B cell (primary cell): ENCODE measurements at regions of chr5 and their contacts with region 1.

Region 1: DNA sequence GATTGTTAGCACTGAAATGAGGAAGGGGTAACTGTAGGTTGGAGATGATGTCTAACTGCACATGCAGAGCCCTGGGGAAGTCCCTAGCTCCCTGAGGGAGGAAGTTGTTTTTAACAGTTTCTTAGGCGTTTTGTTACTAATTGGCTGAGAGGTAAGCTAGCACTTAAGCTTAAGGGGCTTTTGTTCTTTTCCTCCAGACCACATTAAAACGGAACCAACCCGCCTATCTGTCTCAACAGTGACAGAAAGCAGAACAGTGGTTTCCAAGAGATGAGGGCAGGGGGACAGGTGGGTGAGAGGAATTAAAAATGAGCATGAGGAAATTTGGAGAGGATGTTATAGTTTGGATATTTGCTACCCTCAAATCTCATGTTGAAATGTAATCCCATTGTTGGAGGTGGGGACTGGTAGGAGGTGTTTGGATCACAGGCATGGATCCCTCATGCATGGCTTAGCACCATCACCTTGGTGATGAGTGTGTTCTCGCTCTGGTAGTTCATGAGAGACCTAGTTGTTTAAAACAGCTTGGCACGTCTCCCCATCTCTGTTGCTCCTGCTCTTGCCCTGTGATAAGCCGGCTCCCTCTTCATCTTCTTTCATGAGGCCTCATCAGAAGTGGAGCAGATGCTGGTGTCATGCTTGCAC is 38.9 kb downstream of the LYRM7 start:
- DNase-seq: peak; percentile 94
- ATAC-seq: peak; percentile 87
- H3K4me3 ChIP-seq: peak overlapping the region; percentile 42 to 88 (median 59)
- H3K4me3 Mint-ChIP-seq: peak overlapping the region; percentile 85
- H3K27ac ChIP-seq: peak overlapping the region; percentile 89 to 92
- H3K27ac Mint-ChIP-seq: peak overlapping the region; percentile 98
- H3K4me1 ChIP-seq: peaks cover 37 to 53% of the 10 kb centered on the region in 2 donors
- H3K4me1 Mint-ChIP-seq: peaks cover 51% of the 10 kb centered on the region
- H3K27me3 ChIP-seq: no peaks in the 10 kb centered on the region
- H3K27me3 Mint-ChIP-seq: no peaks in the 10 kb centered on the region
- CTCF ChIP-seq: no peak

Region 2: GRCh38 chr5:131165119-131165727 is 44.4 kb before region 1 on chr5 and contains the start of gene HINT1:
- CTCF ChIA-PET with region 1: interaction called, 3 read pairs
- POLR2A ChIA-PET with region 1: interaction called, 3 read pairs
- intact Hi-C with region 1: loop called (anchors 1 kb)
- DNase-seq: peak; percentile 96
- ATAC-seq: peak; percentile 80
- H3K4me3 ChIP-seq: peak within 1 kb of the TSS; percentile 69 to 96 (median 94)
- H3K4me3 Mint-ChIP-seq: peak within 1 kb of the TSS; percentile 90
- H3K27ac ChIP-seq: peak within 1 kb of the TSS; percentile 82 to 92
- H3K27ac Mint-ChIP-seq: peak within 1 kb of the TSS; percentile 98
- H3K4me1 ChIP-seq: peaks cover 20 to 23% of the 10 kb centered on the region in 2 donors
- H3K4me1 Mint-ChIP-seq: peaks cover 41% of the 10 kb centered on the region
- H3K27me3 ChIP-seq: no peaks in the 10 kb centered on the region
- H3K27me3 Mint-ChIP-seq: no peaks in the 10 kb centered on the region
- CTCF ChIP-seq: no peak
- total RNA-seq, gene HINT1: 180 and 206 TPM in 2 replicates

Region 3: GRCh38 chr5:131170540-131171275 is 38.9 kb before region 1 on chr5 and contains the start of gene LYRM7:
- CTCF ChIA-PET with region 1: interaction called, 3 read pairs
- POLR2A ChIA-PET with region 1: interaction called, 3 read pairs
- intact Hi-C with region 1: loop called (anchors 1 kb)
- DNase-seq: peak; percentile 98
- ATAC-seq: peak; percentile 96
- H3K4me3 ChIP-seq: peak within 1 kb of the TSS; percentile 78 to 89 (median 79)
- H3K4me3 Mint-ChIP-seq: peak within 1 kb of the TSS; percentile 98
- H3K27ac ChIP-seq: peak within 1 kb of the TSS; percentile 77 to 81
- H3K27ac Mint-ChIP-seq: peak within 1 kb of the TSS; percentile 94
- H3K4me1 ChIP-seq: peaks cover 24% of the 10 kb centered on the region in 2 donors
- H3K4me1 Mint-ChIP-seq: peaks cover 47% of the 10 kb centered on the region
- H3K27me3 ChIP-seq: no peaks in the 10 kb centered on the region
- H3K27me3 Mint-ChIP-seq: no peaks in the 10 kb centered on the region
- CTCF ChIP-seq: no peak
- total RNA-seq, gene LYRM7: 11.6 and 12.3 TPM in 2 replicates

Region 4: GRCh38 chr5:131224387-131225201 is 15.0 kb after region 1 on chr5:
- CTCF ChIA-PET with region 1: interaction called, 10 read pairs
- POLR2A ChIA-PET with region 1: interaction called, 5 read pairs
- intact Hi-C with region 1: loop called (anchors 1 kb)
- DNase-seq: peak; percentile 73
- ATAC-seq: peak; percentile 82
- H3K4me3 ChIP-seq: peak overlapping the region in 1 of 5 experiments; percentile 8
- H3K4me3 Mint-ChIP-seq: no peak overlapping the region
- H3K27ac ChIP-seq: peak overlapping the region; percentile 59 to 75
- H3K27ac Mint-ChIP-seq: no peak overlapping the region
- H3K4me1 ChIP-seq: peaks cover 48 to 51% of the 10 kb centered on the region in 2 donors
- H3K4me1 Mint-ChIP-seq: peaks cover 21% of the 10 kb centered on the region
- H3K27me3 ChIP-seq: no peaks in the 10 kb centered on the region
- H3K27me3 Mint-ChIP-seq: no peaks in the 10 kb centered on the region
- CTCF ChIP-seq: no peak